Activated naive CD4-positive, alpha-beta T cell treated with anti-CD3 and anti-CD28 coated beads for 36 hours (primary cell): ENCODE measurements at regions of chr12 and their contacts with region 1.

Region 1: DNA sequence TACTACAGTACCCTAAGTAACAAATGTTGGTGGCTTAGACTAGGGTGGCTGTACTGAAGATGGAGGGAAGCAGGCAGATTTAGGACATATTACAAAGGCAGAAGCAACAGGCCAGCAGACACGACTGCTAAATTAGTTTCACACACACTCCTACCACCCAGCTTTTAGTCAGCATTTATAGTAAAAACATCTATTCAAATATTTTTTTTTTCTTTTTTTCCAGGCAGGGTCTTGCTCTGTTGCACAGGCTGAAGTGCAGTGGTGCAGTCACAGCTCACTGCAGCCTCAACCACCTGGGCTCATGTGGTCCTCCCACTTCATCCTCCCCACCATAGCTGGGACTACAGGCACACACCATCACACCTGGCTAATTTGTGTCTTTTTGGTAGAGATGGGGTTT is 72.9 kb downstream of the CDK17 start:
- DNase-seq: no peak
- H3K4me3 Mint-ChIP-seq: no peak overlapping the region
- H3K27ac Mint-ChIP-seq: peak overlapping the region; percentile 65
- H3K4me1 Mint-ChIP-seq: peaks cover 49% of the 10 kb centered on the region
- H3K27me3 Mint-ChIP-seq: no peaks in the 10 kb centered on the region

Region 2: GRCh38 chr12:96294831-96295230 is 32.5 kb before region 1 on chr12:
- CTCF ChIA-PET with region 1: no interaction called
- intact Hi-C with region 1: loop called (anchors 2 kb)
- DNase-seq: no peak
- H3K4me3 Mint-ChIP-seq: no peak overlapping the region
- H3K27ac Mint-ChIP-seq: no peak overlapping the region
- H3K4me1 Mint-ChIP-seq: peaks cover 26% of the 10 kb centered on the region
- H3K27me3 Mint-ChIP-seq: no peaks in the 10 kb centered on the region

Region 3: DNA sequence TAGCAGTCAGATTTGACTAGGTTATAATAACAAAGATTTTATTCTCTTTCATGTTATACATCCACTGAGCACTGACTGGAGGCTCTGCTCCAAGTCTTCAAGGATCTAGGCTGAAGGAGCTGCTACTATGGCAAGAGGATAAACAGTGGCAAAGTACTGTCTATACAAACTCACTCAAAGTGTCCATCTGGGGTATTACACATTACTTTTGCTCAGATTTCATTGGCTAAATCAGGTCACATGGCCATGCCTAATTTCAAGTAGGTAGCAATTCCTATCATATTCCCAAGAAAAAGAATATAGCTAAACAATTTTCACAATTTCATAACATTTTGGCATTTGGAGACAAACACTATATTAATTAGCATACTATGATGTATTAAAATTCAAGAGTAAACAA is 32.0 kb after region 1 on chr12:
- CTCF ChIA-PET with region 1: no interaction called
- intact Hi-C with region 1: loop called (anchors 1 kb)
- DNase-seq: no peak
- H3K4me3 Mint-ChIP-seq: no peak overlapping the region
- H3K27ac Mint-ChIP-seq: no peak overlapping the region
- H3K4me1 Mint-ChIP-seq: peaks cover 75% of the 10 kb centered on the region
- H3K27me3 Mint-ChIP-seq: no peaks in the 10 kb centered on the region